ENCODE measurements at regions of chr6 and their contacts with region 1.

Region 1: DNA sequence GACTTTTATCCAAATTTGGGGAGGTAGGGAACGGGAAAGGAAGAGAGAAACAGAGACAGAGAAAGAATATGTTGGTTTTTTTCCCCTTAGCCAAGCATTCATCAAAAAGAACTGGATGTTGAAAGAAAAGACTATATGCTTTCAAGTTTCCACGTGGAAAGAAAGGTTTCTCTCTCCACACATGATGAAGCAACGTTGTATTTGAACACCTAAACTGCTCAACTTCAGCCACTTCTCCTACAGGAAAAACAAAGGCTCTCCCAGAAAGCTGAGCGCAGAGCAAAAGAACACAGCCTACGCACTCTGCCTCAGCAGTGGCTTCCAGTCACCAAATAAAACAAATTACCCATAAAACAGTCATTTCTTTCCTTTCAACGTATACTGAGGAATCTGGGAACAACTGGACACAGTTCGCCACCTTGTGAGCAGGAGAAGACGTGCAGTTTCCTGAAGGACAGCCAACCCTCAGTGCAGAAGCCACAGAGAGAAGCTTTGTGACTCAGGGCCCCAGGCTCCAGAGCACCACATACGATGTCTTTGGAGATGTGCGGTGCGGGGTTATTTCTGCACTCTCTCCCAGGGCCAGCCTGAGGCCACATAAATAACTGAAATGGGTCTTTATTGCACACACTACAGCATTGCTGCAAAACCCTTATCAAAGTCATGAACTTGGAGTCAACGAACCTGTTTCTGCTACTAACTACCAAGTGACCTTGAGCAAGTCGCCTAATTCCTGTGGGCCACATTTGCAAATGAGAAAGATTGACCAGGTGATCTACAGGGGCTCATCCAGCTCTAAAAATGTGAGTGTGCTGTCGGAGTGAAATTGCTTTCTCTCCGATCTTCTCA is 10.1 kb downstream of the IL17F start:
- DNase-seq: no peak
- ATAC-seq: peak; percentile 81
- H3K4me3 ChIP-seq: no peak overlapping the region
- H3K27ac ChIP-seq: no peak overlapping the region
- H3K4me1 ChIP-seq: peaks cover 9% of the 10 kb centered on the region
- H3K27me3 ChIP-seq: peaks cover 0 to 2% of the 10 kb centered on the region in 2 experiments; a peak in 2 of 4 replicates
- CTCF ChIP-seq: peak; percentile 71 to 78 (median 75)
- EP300 ChIP-seq: no peak
- POLR2A ChIP-seq: no peak
- RAD21 ChIP-seq: peak; percentile 93

Region 2: DNA sequence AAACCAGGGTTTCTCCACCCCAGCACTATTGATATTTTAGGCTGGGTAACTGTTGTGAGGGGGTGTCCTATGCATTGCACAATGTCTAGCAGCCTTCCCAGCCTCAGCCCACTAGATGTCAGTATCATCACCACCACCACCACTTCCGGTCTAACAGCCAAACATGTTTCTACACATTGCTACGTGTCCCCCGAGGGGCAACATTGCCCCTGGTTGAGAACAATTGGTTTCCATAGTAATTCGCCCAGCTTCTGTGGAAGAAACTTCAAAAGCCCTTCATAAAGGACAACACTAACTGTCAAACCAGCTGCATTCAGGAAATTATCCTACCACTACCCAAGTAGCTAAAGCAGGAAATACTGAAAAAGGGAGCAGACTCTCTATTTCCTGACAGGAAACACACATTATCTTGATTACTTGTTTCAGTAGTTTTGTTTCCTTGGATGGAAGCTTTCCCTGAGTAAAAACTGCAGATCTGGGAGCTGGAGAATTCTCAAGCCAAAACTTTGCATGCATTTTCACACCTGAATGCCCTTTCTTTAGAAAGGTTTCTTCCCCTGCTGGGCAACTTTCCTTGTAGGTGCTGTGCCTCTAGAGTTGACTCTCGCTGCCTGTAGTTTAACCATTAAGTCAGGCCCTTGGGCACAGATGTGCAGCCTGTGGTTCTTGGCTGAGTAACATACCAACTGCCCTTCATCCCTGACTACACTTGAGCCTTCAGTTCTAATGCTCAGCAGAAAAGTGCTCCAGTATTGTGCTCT is 170.4 kb before region 1 on chr6:
- CTCF ChIA-PET with region 1: interaction called, 5 read pairs
- POLR2A ChIA-PET with region 1: no interaction called
- RAD21 ChIA-PET with region 1: no interaction called
- SMC1A ChIA-PET with region 1: interaction called, 6 read pairs
- in situ Hi-C with region 1: no loop called
- intact Hi-C with region 1: loop called (anchors 2 kb)
- DNase-seq: peak; percentile 42
- ATAC-seq: peak; percentile 99
- H3K4me3 ChIP-seq: no peak overlapping the region
- H3K27ac ChIP-seq: no peak overlapping the region; the same call in 1 of the 2 replicates
- H3K4me1 ChIP-seq: peaks cover 4% of the 10 kb centered on the region
- H3K27me3 ChIP-seq: 0 out of 4 replicates have a peak, but pooled peaks cover 0 to 4% of the 10 kb centered on the region in 2 experiments
- CTCF ChIP-seq: peak; percentile 59 to 68 (median 64)
- EP300 ChIP-seq: no peak
- POLR2A ChIP-seq: no peak
- RAD21 ChIP-seq: peak; percentile 52

Region 3: DNA sequence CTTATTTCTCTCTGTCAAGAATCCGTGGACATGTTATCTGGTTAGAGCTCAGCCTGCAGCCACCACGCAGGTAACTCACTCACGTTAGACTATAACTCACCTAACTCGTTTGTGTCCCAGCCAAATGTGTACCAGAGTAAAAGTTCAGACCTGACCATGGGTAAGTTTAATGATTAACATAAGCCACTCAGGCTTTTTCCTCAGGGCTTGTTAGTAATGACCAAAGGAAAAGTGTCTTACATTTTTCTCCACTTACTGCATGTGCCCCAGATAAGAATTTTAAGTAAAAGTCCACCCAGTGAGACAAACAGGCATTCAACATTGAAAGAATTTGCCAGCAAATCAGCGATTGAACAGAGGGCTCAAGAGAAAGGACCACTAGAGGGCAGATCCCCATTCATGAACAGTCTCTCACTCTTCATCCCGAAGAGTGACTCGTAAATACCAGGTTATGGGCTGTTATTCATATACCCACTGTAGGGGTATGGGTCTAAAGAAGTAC is 146.7 kb before region 1 on chr6 and contains the start of gene PKHD1:
- CTCF ChIA-PET with region 1: interaction called, 3 read pairs
- POLR2A ChIA-PET with region 1: no interaction called
- RAD21 ChIA-PET with region 1: no interaction called
- SMC1A ChIA-PET with region 1: no interaction called
- in situ Hi-C with region 1: no loop called
- intact Hi-C with region 1: loop called (anchors 5 kb)
- DNase-seq: no peak
- ATAC-seq: peak; percentile 65; the same call in 2 of the 3 replicates
- H3K4me3 ChIP-seq: no peak within 1 kb of the TSS
- H3K27ac ChIP-seq: no peak within 1 kb of the TSS
- H3K4me1 ChIP-seq: no peaks in the 10 kb centered on the region
- H3K27me3 ChIP-seq: no peaks in the 10 kb centered on the region; a peak in 2 of 4 replicates
- CTCF ChIP-seq: peak; percentile 33 to 55 (median 39); a peak in 5 of 6 replicates
- EP300 ChIP-seq: no peak
- POLR2A ChIP-seq: no peak
- RAD21 ChIP-seq: peak; percentile 33; the same call in 1 of the 2 replicates
- polyA plus RNA-seq, gene PKHD1: 0.02 TPM

Region 4: DNA sequence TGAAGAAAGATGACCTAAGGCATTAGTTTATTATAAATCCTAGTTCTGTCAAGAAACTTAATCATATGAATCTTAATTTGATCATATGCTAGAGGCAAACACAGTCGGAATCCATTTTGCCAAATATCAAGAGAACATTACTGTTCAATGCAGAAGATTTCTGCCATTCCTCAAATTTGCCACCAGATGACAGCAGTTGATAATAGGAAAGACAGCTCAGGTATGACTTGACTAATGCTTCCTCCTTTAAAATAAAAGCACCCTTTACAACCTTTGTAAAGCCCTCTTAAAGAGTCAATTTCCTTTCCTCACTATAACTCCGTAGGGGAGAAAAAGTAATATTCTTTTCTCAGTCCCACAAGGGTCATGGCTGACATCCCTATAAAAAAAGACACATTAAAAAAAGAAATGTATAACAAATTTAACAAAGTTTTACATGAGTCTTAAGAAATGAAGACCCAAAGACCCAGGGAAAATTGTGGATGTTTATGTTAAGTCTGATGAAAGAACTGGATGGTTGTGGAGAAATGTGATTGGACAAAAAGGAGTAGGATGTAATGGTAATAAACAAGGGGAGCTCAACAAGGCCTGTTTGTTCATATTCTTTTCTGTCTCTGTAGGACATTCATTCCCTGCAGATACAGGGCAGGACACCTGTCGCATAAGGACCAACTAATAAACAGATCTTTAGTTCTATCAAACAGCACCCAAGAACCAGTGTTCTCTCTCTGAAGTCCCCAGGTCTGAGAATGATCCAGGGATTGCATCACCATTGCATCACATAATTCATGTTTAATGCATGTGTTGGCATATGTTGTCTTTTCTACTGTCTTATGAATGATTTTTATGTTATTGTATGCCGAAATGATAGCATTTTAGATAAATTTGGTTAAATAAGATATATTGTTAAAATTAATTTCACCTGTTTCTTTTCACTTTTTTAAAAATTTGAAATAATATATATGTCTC is 71.0 kb before region 1 on chr6:
- CTCF ChIA-PET with region 1: interaction called, 91 read pairs
- POLR2A ChIA-PET with region 1: no interaction called
- RAD21 ChIA-PET with region 1: interaction called, 28 read pairs
- SMC1A ChIA-PET with region 1: interaction called, 45 read pairs
- in situ Hi-C with region 1: loop called (anchors 5 kb)
- intact Hi-C with region 1: loop called (anchors 1 kb)
- DNase-seq: no peak
- ATAC-seq: peak; percentile 92
- H3K4me3 ChIP-seq: no peak overlapping the region
- H3K27ac ChIP-seq: no peak overlapping the region
- H3K4me1 ChIP-seq: peaks cover 9% of the 10 kb centered on the region; the same call in 1 of the 2 replicates
- H3K27me3 ChIP-seq: no peaks in the 10 kb centered on the region
- CTCF ChIP-seq: peak; percentile 84 to 95 (median 91)
- EP300 ChIP-seq: no peak
- POLR2A ChIP-seq: no peak
- RAD21 ChIP-seq: peak; percentile 100

Region 5: DNA sequence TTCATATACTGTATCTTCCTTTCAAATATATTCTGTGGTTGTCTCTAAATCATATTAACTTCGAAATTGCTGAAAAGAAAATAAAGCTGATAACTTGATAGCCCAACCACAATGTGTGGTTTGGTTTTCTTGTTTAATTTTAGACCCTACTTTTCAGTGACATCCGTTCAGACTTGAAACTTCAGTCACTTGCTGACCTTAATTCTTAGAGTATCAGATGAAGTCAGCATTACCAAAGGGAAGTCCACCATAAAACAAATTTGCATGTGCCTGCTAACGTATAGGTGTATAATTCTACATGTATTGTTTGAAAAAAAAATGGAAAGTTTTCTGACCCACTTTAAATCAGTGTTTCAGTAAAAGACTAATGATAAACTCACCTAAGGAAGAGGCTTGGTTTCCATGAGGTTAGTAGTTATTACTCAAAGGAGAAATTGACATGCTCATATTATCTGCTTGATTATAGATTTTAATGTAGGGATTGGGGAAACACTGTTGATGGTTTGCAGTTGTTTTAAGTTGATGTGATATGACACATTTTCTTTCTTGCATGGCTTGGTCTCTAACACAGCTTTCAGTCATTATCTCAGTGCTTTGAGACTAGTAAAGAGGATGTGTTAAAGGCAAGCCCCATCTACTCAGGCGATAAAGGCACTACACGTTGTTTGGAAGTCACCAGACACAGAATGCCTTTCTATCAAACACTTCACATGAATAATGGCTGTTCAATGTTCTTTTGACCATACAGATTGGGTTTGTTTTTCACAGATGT is 53.2 kb before region 1 on chr6:
- CTCF ChIA-PET with region 1: interaction called, 10 read pairs
- POLR2A ChIA-PET with region 1: no interaction called
- RAD21 ChIA-PET with region 1: interaction called, 5 read pairs
- SMC1A ChIA-PET with region 1: interaction called, 5 read pairs
- in situ Hi-C with region 1: no loop called
- intact Hi-C with region 1: no loop called
- DNase-seq: peak; percentile 58
- ATAC-seq: peak; percentile 81
- H3K4me3 ChIP-seq: 0 out of 2 replicates have a peak overlapping the region, but pooled peaks have one; percentile 18
- H3K27ac ChIP-seq: peak overlapping the region; percentile 40
- H3K4me1 ChIP-seq: peaks cover 28% of the 10 kb centered on the region
- H3K27me3 ChIP-seq: peaks cover 0 to 2% of the 10 kb centered on the region in 2 experiments; a peak in 2 of 4 replicates
- CTCF ChIP-seq: no peak
- EP300 ChIP-seq: peak; percentile 7 to 40; a peak in 1 of 4 replicates
- POLR2A ChIP-seq: no peak
- RAD21 ChIP-seq: no peak

Measured in GM12878 (cell line).